ENCODE measurements at regions of chr5 and their contacts with region 1.

Region 1: GRCh38 chr5:41869739-41870626 is at the start of gene OXCT1:
- DNase-seq: peak; percentile 73 to 82
- H3K4me3 ChIP-seq: peak within 1 kb of the TSS; percentile 64
- H3K4me3 Mint-ChIP-seq: peak within 1 kb of the TSS; percentile 74
- H3K27ac Mint-ChIP-seq: peak within 1 kb of the TSS; percentile 62
- H3K4me1 ChIP-seq: peaks cover 4% of the 10 kb centered on the region; the same call in 1 of the 2 replicates
- H3K4me1 Mint-ChIP-seq: peaks cover 7% of the 10 kb centered on the region
- H3K27me3 ChIP-seq: no peaks in the 10 kb centered on the region
- H3K27me3 Mint-ChIP-seq: no peaks in the 10 kb centered on the region
- CTCF ChIP-seq: no peak
- total RNA-seq, gene OXCT1: 20.6 and 22.5 TPM in 2 replicates

Region 2: GRCh38 chr5:41843456-41844370 is 26.3 kb before region 1 on chr5:
- CTCF ChIA-PET with region 1: no interaction called
- POLR2A ChIA-PET with region 1: no interaction called
- intact Hi-C with region 1: no loop called
- DNase-seq: peak; percentile 42 to 69
- H3K4me3 ChIP-seq: no peak overlapping the region
- H3K4me3 Mint-ChIP-seq: no peak overlapping the region
- H3K27ac Mint-ChIP-seq: no peak overlapping the region
- H3K4me1 ChIP-seq: no peaks in the 10 kb centered on the region
- H3K4me1 Mint-ChIP-seq: no peaks in the 10 kb centered on the region
- H3K27me3 ChIP-seq: no peaks in the 10 kb centered on the region
- H3K27me3 Mint-ChIP-seq: no peaks in the 10 kb centered on the region
- CTCF ChIP-seq: peak; percentile 79 to 80

Region 3: DNA sequence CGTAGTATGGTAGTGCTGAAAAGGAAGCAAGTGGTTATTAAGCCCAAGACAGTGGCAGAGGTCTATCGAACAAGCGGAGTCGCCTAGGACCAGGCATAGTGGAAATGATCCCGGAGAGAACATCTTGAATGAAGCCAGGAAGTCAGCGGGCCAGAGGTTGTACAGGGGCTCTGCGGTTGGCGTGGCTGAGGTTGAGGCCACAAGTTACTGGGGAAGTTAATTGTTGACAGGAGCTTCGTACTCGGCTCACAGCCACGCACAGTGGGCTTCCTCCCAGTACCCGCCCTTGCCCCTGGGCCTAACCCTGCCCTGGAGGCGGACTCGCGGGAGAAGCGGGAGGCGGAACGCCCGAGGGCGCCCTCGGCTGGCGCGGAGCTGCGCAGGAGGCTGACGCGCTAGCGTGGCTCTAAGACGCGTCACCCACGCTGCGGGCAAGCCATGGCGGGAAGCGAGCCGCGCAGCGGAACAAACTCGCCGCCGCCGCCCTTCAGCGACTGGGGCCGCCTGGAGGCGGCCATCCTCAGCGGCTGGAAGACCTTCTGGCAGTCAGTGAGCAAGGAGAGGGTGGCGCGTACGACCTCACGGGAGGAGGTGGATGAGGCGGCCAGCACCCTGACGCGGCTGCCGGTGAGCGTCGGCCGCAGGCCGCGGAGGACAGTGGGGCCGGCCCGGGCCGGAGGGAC is 55.0 kb after region 1 on chr5 and contains the start of gene FBXO4:
- CTCF ChIA-PET with region 1: no interaction called
- POLR2A ChIA-PET with region 1: interaction called, 3 read pairs
- intact Hi-C with region 1: loop called (anchors 1 kb)
- DNase-seq: peak; percentile 87
- H3K4me3 ChIP-seq: peak within 1 kb of the TSS; percentile 71
- H3K4me3 Mint-ChIP-seq: peak within 1 kb of the TSS; percentile 87
- H3K27ac Mint-ChIP-seq: peak within 1 kb of the TSS; percentile 92
- H3K4me1 ChIP-seq: peaks cover 7% of the 10 kb centered on the region
- H3K4me1 Mint-ChIP-seq: no peaks in the 10 kb centered on the region
- H3K27me3 ChIP-seq: no peaks in the 10 kb centered on the region
- H3K27me3 Mint-ChIP-seq: no peaks in the 10 kb centered on the region
- CTCF ChIP-seq: peak; percentile 36 to 81
- total RNA-seq, gene FBXO4: 8.1 and 9.7 TPM in 2 replicates

Measured in Caco-2 (cell line).